Vagina (tissue), 2 donors: ENCODE measurements at regions of chr13 and their contacts with region 1.

Region 1: GRCh38 chr13:67330149-67330548 is 100.0 kb upstream of the PCDH9 start:
- DNase-seq: no peak
- H3K4me3 ChIP-seq: no peak overlapping the region
- H3K27ac ChIP-seq: no peak overlapping the region
- H3K4me1 ChIP-seq: no peaks in the 10 kb centered on the region
- H3K27me3 ChIP-seq: no peaks in the 10 kb centered on the region
- CTCF ChIP-seq: no peak
- POLR2A ChIP-seq: no peak

Region 2: DNA sequence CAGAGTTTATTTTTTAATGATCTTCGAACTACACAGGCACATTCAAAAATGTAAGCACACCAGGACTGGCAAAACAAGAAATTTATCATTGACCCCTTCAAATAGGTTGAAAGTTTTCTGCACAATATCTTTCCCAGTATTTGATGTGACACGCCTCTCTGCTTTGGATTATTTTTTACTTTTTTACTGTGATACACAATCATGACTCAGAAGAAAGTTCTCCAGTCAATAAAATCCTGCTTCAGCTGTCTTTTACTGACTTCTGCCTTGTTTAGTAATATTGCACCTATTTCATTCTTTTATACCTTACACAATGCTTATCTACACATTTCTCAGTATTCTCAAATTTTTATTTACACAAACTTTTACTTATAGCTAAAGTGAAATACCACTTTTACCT is 1850.5 kb before region 1 on chr13:
- intact Hi-C with region 1: loop called (anchors 5 kb)
- DNase-seq: no peak
- H3K4me3 ChIP-seq: no peak overlapping the region
- H3K27ac ChIP-seq: no peak overlapping the region
- H3K4me1 ChIP-seq: no peaks in the 10 kb centered on the region
- H3K27me3 ChIP-seq: no peaks in the 10 kb centered on the region
- CTCF ChIP-seq: no peak
- POLR2A ChIP-seq: no peak